ENCODE measurements at regions of chr3 and their contacts with region 1.

Region 1: GRCh38 chr3:63661248-63661647 is 8.8 kb downstream of the SNTN start:
- DNase-seq: no peak
- H3K4me3 ChIP-seq: no peak overlapping the region
- H3K4me3 Mint-ChIP-seq: no peak overlapping the region
- H3K27ac Mint-ChIP-seq: no peak overlapping the region
- H3K4me1 ChIP-seq: no peaks in the 10 kb centered on the region
- H3K4me1 Mint-ChIP-seq: no peaks in the 10 kb centered on the region
- H3K27me3 ChIP-seq: no peaks in the 10 kb centered on the region
- H3K27me3 Mint-ChIP-seq: peaks cover 5% of the 10 kb centered on the region
- CTCF ChIP-seq: peak in 1 of 2 experiments; percentile 17

Region 2: GRCh38 chr3:63364910-63365431 is 296.3 kb before region 1 on chr3:
- CTCF ChIA-PET with region 1: interaction called, 23 read pairs
- POLR2A ChIA-PET with region 1: no interaction called
- intact Hi-C with region 1: loop called (anchors 1 kb)
- DNase-seq: peak in 1 of 2 experiments; percentile 17
- H3K4me3 ChIP-seq: no peak overlapping the region
- H3K4me3 Mint-ChIP-seq: no peak overlapping the region
- H3K27ac Mint-ChIP-seq: no peak overlapping the region
- H3K4me1 ChIP-seq: no peaks in the 10 kb centered on the region
- H3K4me1 Mint-ChIP-seq: no peaks in the 10 kb centered on the region
- H3K27me3 ChIP-seq: no peaks in the 10 kb centered on the region
- H3K27me3 Mint-ChIP-seq: peaks cover 7% of the 10 kb centered on the region
- CTCF ChIP-seq: peak; percentile 40 to 63

Region 3: GRCh38 chr3:63405882-63406281 is 255.4 kb before region 1 on chr3:
- CTCF ChIA-PET with region 1: no interaction called
- POLR2A ChIA-PET with region 1: no interaction called
- intact Hi-C with region 1: loop called (anchors 1 kb)
- DNase-seq: peak in 1 of 2 experiments; percentile 6
- H3K4me3 ChIP-seq: no peak overlapping the region
- H3K4me3 Mint-ChIP-seq: no peak overlapping the region
- H3K27ac Mint-ChIP-seq: no peak overlapping the region
- H3K4me1 ChIP-seq: no peaks in the 10 kb centered on the region
- H3K4me1 Mint-ChIP-seq: no peaks in the 10 kb centered on the region
- H3K27me3 ChIP-seq: no peaks in the 10 kb centered on the region; the same call in 1 of the 2 replicates
- H3K27me3 Mint-ChIP-seq: peaks cover 5% of the 10 kb centered on the region
- CTCF ChIP-seq: peak in 1 of 2 experiments; percentile 28

Region 4: GRCh38 chr3:63624941-63625560 is 36.2 kb before region 1 on chr3:
- CTCF ChIA-PET with region 1: no interaction called
- POLR2A ChIA-PET with region 1: no interaction called
- intact Hi-C with region 1: no loop called
- DNase-seq: no peak
- H3K4me3 ChIP-seq: no peak overlapping the region
- H3K4me3 Mint-ChIP-seq: no peak overlapping the region
- H3K27ac Mint-ChIP-seq: no peak overlapping the region
- H3K4me1 ChIP-seq: no peaks in the 10 kb centered on the region
- H3K4me1 Mint-ChIP-seq: no peaks in the 10 kb centered on the region
- H3K27me3 ChIP-seq: no peaks in the 10 kb centered on the region
- H3K27me3 Mint-ChIP-seq: peaks cover 2% of the 10 kb centered on the region
- CTCF ChIP-seq: no peak

Region 5: DNA sequence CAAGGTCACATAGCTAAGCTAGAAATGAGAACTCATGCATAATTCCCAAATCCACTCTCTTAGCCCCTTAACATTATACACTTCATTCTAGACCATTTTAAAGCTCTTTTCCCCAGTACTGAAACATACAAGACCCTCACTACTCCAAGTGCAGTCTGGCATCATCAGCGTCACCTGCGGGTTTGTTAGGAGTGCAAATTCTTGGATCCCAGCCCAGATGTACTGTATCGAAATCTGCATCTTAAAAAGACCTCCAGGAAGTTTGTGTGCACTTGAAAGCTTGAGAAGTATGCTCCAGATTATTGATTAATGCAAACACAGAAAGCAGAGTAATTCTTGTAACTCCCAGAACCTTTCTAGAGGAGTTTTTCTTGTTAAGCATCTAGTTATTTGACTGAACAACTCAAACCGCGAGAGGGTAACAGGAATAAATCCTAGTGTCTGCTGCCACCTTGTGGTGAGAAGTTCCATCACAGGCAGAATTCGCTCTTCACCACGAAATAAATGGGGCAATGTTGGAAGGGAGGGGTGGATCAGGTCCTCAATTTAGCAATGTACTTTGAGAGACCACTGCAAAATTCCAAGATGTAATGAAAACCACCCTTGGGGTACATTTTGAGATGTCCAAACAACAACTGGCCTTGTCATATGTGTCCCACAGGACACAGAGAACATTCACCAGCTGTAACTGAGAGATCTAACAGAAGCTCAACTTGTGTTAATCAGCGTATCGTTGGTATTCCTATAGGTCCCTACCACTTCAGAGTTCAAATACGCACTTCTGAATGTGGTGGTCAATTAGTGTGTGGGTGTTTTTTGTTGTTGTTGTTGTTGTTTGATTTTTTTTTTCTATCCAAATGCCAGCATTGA is 157.3 kb after region 1 on chr3:
- CTCF ChIA-PET with region 1: interaction called, 3 read pairs
- POLR2A ChIA-PET with region 1: no interaction called
- intact Hi-C with region 1: loop called (anchors 1 kb)
- DNase-seq: peak; percentile 40 to 63
- H3K4me3 ChIP-seq: no peak overlapping the region
- H3K4me3 Mint-ChIP-seq: no peak overlapping the region
- H3K27ac Mint-ChIP-seq: no peak overlapping the region
- H3K4me1 ChIP-seq: no peaks in the 10 kb centered on the region
- H3K4me1 Mint-ChIP-seq: no peaks in the 10 kb centered on the region
- H3K27me3 ChIP-seq: no peaks in the 10 kb centered on the region
- H3K27me3 Mint-ChIP-seq: no peaks in the 10 kb centered on the region
- CTCF ChIP-seq: peak; percentile 76 to 83